ENCODE measurements at regions of chr14 and their contacts with region 1.

Region 1: GRCh38 chr14:77799863-77800730 is at the start of gene ADCK1:
- DNase-seq: peak; percentile 76 to 88
- ATAC-seq: peak; percentile 94 to 95
- H3K4me3 ChIP-seq: peak within 1 kb of the TSS; percentile 66
- H3K27ac ChIP-seq: peak within 1 kb of the TSS; percentile 94 to 98
- H3K4me1 ChIP-seq: peaks cover 13% of the 10 kb centered on the region
- CTCF ChIP-seq: no peak
- EP300 ChIP-seq: no peak
- POLR2A ChIP-seq: peak; percentile 75
- RAD21 ChIP-seq: no peak
- polyA plus RNA-seq, gene ADCK1: 8.1 and 10.0 TPM in 2 replicates

Region 2: DNA sequence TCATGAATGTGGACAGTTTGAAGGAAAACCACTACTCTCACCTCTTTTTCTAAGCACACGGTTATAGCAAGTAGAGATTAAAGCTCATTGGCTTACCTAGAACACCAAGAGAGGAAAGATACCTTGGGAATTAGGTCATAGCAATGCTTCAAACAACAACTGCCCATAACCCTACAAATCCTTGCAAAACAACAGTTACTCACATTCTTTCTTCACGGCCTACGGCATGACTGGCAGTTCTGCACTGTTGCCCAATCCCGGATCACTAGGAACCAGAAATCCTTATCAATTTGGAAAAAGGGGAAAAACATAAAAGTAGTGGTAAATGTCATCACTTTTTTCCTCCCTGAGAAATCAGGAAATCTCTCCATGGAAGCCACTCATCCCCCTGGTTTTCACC is 291.8 kb before region 1 on chr14:
- CTCF ChIA-PET with region 1: no interaction called
- POLR2A ChIA-PET with region 1: no interaction called
- DNase-seq: peak in 1 of 2 experiments; percentile 43
- ATAC-seq: peak; percentile 78 to 83
- H3K4me3 ChIP-seq: no peak overlapping the region
- H3K27ac ChIP-seq: peak overlapping the region in 1 of 2 experiments; percentile 41; a peak in 3 of 6 replicates
- H3K4me1 ChIP-seq: peaks cover 15% of the 10 kb centered on the region
- CTCF ChIP-seq: no peak
- EP300 ChIP-seq: no peak
- POLR2A ChIP-seq: no peak
- RAD21 ChIP-seq: no peak

Region 3: GRCh38 chr14:77760381-77761246 is 39.5 kb before region 1 on chr14 and contains the start of gene SNW1:
- CTCF ChIA-PET with region 1: interaction called, 17 read pairs
- POLR2A ChIA-PET with region 1: interaction called, 13 read pairs
- DNase-seq: peak; percentile 94
- ATAC-seq: peak; percentile 96
- H3K4me3 ChIP-seq: peak within 1 kb of the TSS; percentile 99
- H3K27ac ChIP-seq: peak within 1 kb of the TSS; percentile 96 to 98
- H3K4me1 ChIP-seq: peaks cover 13% of the 10 kb centered on the region
- CTCF ChIP-seq: no peak
- EP300 ChIP-seq: peak in 1 of 2 experiments; percentile 14; a peak in 1 of 5 replicates
- POLR2A ChIP-seq: peak; percentile 66
- RAD21 ChIP-seq: no peak
- polyA plus RNA-seq, gene SNW1: 68.1 and 84.0 TPM in 2 replicates